Activated CD8-positive, alpha-beta T cell treated with anti-CD3 and anti-CD28 coated beads, Interleukin-2, amount 10 ng/mL, durations not matched to agents 7 days and 5 days (primary cell): ENCODE measurements at regions of chr12 and their contacts with region 1.

Region 1: DNA sequence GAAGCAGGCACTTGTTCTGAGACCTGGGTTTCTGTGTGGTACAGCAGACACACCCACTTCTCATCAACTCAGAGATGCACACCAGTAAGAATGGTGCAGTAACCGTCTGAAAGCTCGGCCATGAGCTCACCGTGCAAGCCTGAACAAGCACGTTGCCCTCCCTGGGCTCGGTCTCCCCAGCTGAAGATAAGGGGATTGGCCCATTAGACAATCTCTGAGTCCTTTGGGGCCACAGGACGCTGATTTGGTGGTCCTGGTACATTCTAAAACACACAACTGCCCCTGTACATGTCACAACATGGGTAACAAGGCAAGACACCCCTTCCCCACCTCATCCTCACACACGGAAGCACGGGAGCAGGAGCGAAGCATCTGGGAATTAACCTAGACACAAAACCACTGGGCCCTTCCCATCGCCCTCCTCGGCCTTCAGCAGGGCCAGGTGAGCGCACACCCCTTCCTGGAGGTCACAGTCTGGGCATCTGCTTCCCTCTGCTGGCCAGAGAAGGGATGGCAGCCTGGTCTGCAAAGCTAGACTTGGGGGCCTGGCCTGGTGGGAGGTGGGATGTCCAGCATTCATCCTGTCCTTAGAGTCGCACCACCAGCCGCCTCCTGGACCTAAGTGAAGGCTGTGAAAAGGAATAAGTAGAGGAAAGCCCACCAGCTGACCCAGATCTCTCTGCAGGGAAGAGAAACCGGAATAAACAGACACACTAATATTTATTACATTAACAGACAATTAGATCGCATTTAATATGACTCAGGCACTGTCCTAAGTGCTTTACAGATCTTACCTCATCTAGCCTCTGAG is 18.9 kb upstream of the SMUG1 start:
- DNase-seq: peak; percentile 85
- ATAC-seq: peak; percentile 92
- H3K4me3 Mint-ChIP-seq: no peak overlapping the region
- H3K27ac Mint-ChIP-seq: no peak overlapping the region
- H3K4me1 Mint-ChIP-seq: peaks cover 4% of the 10 kb centered on the region
- H3K27me3 Mint-ChIP-seq: peaks cover 40% of the 10 kb centered on the region

Region 2: GRCh38 chr12:53984901-53985709 is 222.6 kb before region 1 on chr12 and contains the start of gene HOXC10:
- CTCF ChIA-PET with region 1: interaction called, 35 read pairs
- POLR2A ChIA-PET with region 1: no interaction called
- DNase-seq: peak; percentile 86
- ATAC-seq: peak; percentile 74
- H3K4me3 Mint-ChIP-seq: peak within 1 kb of the TSS; percentile 48
- H3K27ac Mint-ChIP-seq: peak within 1 kb of the TSS; percentile 52
- H3K4me1 Mint-ChIP-seq: peaks cover 43% of the 10 kb centered on the region
- H3K27me3 Mint-ChIP-seq: peaks cover 93% of the 10 kb centered on the region
- total RNA-seq, gene HOXC10: not detected

Region 3: GRCh38 chr12:54012631-54013409 is 194.9 kb before region 1 on chr12:
- CTCF ChIA-PET with region 1: interaction called, 89 read pairs
- POLR2A ChIA-PET with region 1: no interaction called
- DNase-seq: no peak
- ATAC-seq: no peak
- H3K4me3 Mint-ChIP-seq: no peak overlapping the region
- H3K27ac Mint-ChIP-seq: no peak overlapping the region
- H3K4me1 Mint-ChIP-seq: peaks cover 20% of the 10 kb centered on the region
- H3K27me3 Mint-ChIP-seq: peaks cover 92% of the 10 kb centered on the region

Region 4: DNA sequence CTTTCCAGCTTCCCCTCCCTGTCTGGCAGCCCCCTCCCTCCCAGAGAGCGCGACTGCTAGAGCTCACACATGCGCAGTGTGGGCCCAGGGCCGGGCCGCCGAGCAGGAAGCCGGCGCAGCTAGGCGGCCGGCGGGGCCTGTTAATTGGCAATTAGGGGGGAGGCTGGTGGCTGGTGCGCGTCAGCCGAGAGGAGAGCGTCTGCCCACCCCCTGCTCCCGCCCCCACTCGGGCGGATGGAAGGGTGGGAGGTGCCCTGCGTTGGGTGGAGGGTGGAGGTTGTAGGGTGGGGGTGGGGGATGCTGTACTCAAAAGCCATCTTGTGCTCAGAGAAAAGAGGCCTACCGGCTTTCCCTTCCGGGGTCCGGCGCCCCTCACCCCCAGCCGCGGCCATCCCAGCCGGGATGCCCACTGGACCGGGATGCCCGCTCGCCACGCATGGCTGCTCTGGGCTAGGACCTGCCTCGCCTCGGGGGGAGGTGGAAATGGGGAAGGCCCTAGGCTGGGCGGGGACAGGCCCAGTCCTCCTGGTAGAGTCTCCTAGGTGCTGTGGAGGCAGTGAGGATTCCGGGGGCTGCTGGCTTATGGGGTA is 189.7 kb before region 1 on chr12:
- CTCF ChIA-PET with region 1: interaction called, 19 read pairs
- POLR2A ChIA-PET with region 1: no interaction called
- DNase-seq: peak; percentile 83
- ATAC-seq: peak; percentile 91
- H3K4me3 Mint-ChIP-seq: peak overlapping the region; percentile 80
- H3K27ac Mint-ChIP-seq: peak overlapping the region; percentile 46
- H3K4me1 Mint-ChIP-seq: peaks cover 27% of the 10 kb centered on the region
- H3K27me3 Mint-ChIP-seq: peaks cover 80% of the 10 kb centered on the region

Region 5: GRCh38 chr12:54191550-54192022 is 16.1 kb before region 1 on chr12:
- CTCF ChIA-PET with region 1: interaction called, 70 read pairs
- POLR2A ChIA-PET with region 1: no interaction called
- DNase-seq: peak; percentile 85
- ATAC-seq: peak; percentile 66
- H3K4me3 Mint-ChIP-seq: no peak overlapping the region
- H3K27ac Mint-ChIP-seq: no peak overlapping the region
- H3K4me1 Mint-ChIP-seq: peaks cover 24% of the 10 kb centered on the region
- H3K27me3 Mint-ChIP-seq: peaks cover 50% of the 10 kb centered on the region